ENCODE measurements at regions of chr5 and their contacts with region 1.

Region 1: DNA sequence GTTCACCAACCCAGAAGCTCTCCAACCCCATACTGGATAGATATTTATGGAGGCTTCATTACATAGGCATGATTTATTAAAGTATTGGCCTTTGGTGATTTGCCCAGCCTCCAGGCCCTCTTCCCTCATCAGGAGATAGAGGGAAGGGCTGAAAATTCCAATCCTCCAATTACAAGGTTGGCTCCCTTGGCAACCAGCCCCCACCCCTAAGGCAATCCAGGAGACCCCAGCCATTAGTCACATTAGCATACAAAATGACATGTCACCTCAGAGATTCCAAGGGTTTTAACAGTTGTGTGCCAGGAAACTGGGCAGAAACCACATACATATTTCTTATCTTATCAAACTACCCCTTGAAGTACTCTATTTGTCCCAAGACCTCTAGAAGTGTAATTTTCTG is 210.0 kb downstream of the HINT1 start:
- DNase-seq: no peak
- H3K4me3 ChIP-seq: no peak overlapping the region
- H3K4me3 Mint-ChIP-seq: peak overlapping the region; percentile 10
- H3K27ac Mint-ChIP-seq: peak overlapping the region; percentile 51
- H3K4me1 ChIP-seq: peaks cover 21% of the 10 kb centered on the region
- H3K4me1 Mint-ChIP-seq: peaks cover 15% of the 10 kb centered on the region
- H3K27me3 ChIP-seq: no peaks in the 10 kb centered on the region
- H3K27me3 Mint-ChIP-seq: no peaks in the 10 kb centered on the region
- CTCF ChIP-seq: no peak

Region 2: DNA sequence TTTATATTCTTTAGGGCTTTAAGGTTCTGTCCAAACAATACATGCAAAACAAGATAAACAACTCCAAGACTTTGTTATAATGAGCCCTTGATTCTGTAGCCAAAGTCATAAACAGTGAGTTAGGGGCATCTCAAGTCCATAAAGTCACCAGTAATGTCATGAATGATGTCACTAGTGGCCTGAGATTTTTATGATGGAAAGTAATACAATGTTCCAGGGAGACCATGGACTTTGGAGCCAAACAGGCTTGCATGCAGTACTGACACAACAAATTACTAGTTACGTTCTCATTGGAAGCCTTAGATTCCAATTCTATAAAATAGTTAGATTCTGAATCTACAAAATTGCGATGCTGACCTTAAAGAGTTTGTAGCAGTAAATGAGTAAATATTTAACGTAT is 70.0 kb before region 1 on chr5:
- CTCF ChIA-PET with region 1: no interaction called
- POLR2A ChIA-PET with region 1: no interaction called
- intact Hi-C with region 1: loop called (anchors 5 kb)
- DNase-seq: peak; percentile 47 to 59
- H3K4me3 ChIP-seq: no peak overlapping the region
- H3K4me3 Mint-ChIP-seq: no peak overlapping the region
- H3K27ac Mint-ChIP-seq: peak overlapping the region; percentile 83
- H3K4me1 ChIP-seq: peaks cover 29% of the 10 kb centered on the region
- H3K4me1 Mint-ChIP-seq: peaks cover 23% of the 10 kb centered on the region
- H3K27me3 ChIP-seq: no peaks in the 10 kb centered on the region
- H3K27me3 Mint-ChIP-seq: no peaks in the 10 kb centered on the region
- CTCF ChIP-seq: no peak

Region 3: DNA sequence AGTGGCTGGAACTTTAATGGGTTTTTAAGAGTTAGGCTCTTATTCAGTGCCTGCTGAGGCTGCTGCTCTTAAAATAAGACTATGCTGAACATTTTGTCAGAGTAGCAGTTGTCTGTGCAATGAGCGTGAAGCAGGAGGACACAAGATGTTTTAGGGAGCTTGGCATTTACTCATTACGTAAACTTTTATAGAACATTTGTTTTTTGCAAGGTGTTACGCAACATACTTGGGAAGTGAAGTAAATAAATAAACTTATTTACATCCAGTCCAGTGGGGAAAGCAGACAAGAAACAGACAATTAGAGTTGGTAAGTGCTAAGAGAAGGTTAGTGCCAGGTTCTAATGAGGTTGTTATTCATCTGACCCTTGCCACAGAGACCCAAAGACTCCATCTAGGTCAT is 16.0 kb before region 1 on chr5:
- CTCF ChIA-PET with region 1: no interaction called
- POLR2A ChIA-PET with region 1: no interaction called
- intact Hi-C with region 1: loop called (anchors 1 kb)
- DNase-seq: no peak
- H3K4me3 ChIP-seq: no peak overlapping the region
- H3K4me3 Mint-ChIP-seq: no peak overlapping the region
- H3K27ac Mint-ChIP-seq: no peak overlapping the region
- H3K4me1 ChIP-seq: peaks cover 14% of the 10 kb centered on the region
- H3K4me1 Mint-ChIP-seq: peaks cover 14% of the 10 kb centered on the region
- H3K27me3 ChIP-seq: no peaks in the 10 kb centered on the region
- H3K27me3 Mint-ChIP-seq: no peaks in the 10 kb centered on the region
- CTCF ChIP-seq: no peak